CD4-positive, alpha-beta memory T cell (primary cell): ENCODE measurements at regions of chr14 and their contacts with region 1.

Region 1: DNA sequence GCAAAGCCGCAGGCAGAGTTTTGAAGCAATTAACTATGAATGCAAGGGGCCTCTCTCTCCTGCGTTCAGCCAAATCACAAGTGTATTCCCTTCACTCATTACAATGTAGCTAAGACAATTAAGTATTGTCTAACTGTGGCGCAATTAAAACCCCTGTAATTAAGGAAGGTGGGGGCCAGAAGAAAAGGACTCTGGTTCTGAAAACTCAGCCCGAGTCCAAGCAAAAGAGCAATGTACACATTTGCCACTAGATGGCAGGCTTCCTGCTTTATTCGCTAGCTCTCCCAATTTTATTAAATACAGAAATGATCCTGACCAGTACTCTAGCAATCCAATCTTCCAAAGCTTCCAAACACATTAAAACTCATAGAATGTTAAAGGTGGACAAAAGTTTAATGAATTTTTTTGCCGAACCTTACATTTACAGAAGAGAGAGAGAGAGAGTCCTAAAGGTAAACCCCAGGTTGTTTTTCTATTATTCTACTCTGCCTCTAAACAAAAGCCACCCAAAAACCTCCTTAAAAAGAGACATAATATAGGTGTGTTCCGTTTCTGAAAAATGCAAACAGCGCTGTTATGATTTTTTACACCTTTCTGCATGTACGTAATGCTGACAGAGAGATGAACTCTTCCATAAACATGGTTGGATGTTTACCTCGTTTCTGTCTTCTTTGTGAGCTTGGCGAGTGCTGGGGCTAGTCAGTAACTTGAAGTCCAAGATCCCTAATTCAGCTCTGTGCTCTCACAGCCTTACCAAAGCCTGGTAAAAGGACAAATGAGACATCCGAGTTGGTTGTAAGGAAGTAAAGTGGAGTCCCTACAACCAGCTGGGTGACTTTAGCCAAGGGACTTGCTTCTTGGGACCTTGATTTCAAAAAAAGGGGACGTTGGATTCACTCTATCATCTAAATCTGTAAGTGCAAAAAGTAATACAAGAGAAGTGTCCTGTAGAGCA is 50.9 kb upstream of the VASH1 start:
- DNase-seq: peak in 4 of 5 donors; percentile 14 to 40 (median 26)
- H3K4me3 ChIP-seq: no peak overlapping the region
- H3K4me3 Mint-ChIP-seq: no peak overlapping the region
- H3K27ac ChIP-seq: no peak overlapping the region
- H3K27ac Mint-ChIP-seq: no peak overlapping the region
- H3K4me1 ChIP-seq: no peaks in the 10 kb centered on the region
- H3K4me1 Mint-ChIP-seq: no peaks in the 10 kb centered on the region
- H3K27me3 ChIP-seq: no peaks in the 10 kb centered on the region
- H3K27me3 Mint-ChIP-seq: peaks cover 6 to 9% of the 10 kb centered on the region in 2 donors

Region 2: GRCh38 chr14:76329154-76329928 is 381.0 kb before region 1 on chr14:
- CTCF ChIA-PET with region 1: no interaction called
- POLR2A ChIA-PET with region 1: no interaction called
- intact Hi-C with region 1: no loop called
- DNase-seq: no peak
- H3K4me3 ChIP-seq: no peak overlapping the region
- H3K4me3 Mint-ChIP-seq: no peak overlapping the region
- H3K27ac ChIP-seq: no peak overlapping the region
- H3K27ac Mint-ChIP-seq: no peak overlapping the region
- H3K4me1 ChIP-seq: no peaks in the 10 kb centered on the region
- H3K4me1 Mint-ChIP-seq: no peaks in the 10 kb centered on the region
- H3K27me3 ChIP-seq: peaks cover 3% of the 10 kb centered on the region
- H3K27me3 Mint-ChIP-seq: peaks cover 34 to 45% of the 10 kb centered on the region in 2 donors

Region 3: DNA sequence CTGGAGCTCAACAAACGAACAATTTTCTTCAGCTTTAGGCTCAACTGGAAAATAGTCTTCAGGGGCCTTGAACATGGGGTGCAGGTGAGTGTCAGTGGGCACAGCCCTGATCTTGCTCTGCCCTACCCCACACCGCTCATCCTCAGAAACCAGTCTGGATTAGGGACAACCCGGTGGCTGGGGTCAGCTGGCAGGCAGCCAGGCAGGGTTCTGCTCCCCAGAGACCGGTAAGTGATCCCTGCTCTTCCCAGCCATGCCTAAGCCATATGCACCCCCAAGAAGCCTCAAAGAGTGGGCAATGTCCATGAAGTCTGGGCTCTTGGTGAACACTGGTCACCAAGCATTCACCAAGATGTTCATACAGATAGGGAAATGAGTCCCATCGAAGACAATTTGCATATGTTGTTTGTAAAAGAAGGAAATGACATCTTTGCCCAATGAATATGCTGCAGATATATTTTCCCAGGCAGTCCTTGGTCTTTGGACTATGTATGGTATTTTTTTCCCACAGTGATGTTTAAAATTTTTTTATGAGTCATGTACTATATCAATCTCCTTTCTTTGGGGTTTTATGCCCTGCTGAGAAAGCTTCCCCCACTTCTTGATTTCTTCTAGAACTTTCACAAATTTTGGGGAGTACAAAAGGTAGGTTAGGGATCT is 13.0 kb before region 1 on chr14:
- CTCF ChIA-PET with region 1: interaction called, 45 read pairs
- POLR2A ChIA-PET with region 1: no interaction called
- intact Hi-C with region 1: no loop called
- DNase-seq: no peak
- H3K4me3 ChIP-seq: no peak overlapping the region
- H3K4me3 Mint-ChIP-seq: no peak overlapping the region
- H3K27ac ChIP-seq: no peak overlapping the region
- H3K27ac Mint-ChIP-seq: no peak overlapping the region
- H3K4me1 ChIP-seq: no peaks in the 10 kb centered on the region
- H3K4me1 Mint-ChIP-seq: no peaks in the 10 kb centered on the region
- H3K27me3 ChIP-seq: no peaks in the 10 kb centered on the region
- H3K27me3 Mint-ChIP-seq: peaks cover 4% of the 10 kb centered on the region in 2 donors

Region 4: DNA sequence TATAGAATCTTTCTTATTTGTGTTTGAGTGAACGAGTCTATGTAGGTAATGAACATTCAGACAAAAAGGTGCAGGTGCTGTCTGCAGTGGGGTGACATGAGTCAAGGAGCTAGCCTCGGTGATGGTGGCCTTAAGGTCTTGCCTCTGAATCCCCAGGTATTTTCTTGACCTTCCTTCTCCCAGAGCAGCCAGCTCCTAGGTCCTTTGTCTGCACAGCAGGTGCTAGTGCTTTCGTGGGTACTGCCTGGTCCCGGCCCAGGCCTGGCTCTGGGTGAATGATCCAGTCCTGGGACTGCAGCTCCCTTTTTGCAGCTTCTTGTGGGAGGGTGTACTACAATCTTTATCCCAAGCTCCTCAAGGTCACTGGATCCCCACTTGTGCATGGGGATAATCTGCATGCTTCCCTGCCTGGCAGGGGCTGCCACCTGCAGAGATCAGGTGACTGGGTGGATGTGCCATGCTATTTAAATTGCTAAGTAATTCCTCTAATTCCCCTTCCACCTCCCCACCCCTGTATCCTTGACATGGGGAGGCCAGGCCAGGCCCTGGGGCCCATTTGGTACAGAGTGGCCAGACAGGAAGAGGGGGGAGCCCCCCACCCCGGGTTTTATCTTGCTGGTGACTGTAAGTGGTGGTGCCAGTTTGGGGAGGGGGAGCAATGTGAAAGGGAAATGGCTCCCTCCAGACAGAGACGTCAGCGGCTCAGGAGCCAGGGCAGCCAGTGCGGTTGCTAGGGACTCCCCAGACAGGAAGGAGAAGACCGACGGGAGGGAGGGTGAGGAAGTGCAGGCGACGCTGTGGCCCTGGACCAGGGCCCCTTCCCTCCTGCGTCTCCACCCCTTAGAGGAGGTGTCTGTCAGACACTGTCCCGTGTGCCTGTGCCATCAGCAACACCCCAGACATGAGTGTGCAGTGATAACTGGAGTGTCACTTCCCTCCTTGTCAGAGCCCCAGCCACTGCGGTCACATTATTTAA is 57.6 kb after region 1 on chr14:
- CTCF ChIA-PET with region 1: interaction called, 12 read pairs
- POLR2A ChIA-PET with region 1: interaction called, 3 read pairs
- intact Hi-C with region 1: no loop called
- DNase-seq: peak; percentile 16 to 96 (median 81)
- H3K4me3 ChIP-seq: peak overlapping the region in 1 of 2 donors; percentile 2
- H3K4me3 Mint-ChIP-seq: peak overlapping the region in 6 of 8 donors; percentile 16 to 69 (median 60)
- H3K27ac ChIP-seq: peak overlapping the region; percentile 75
- H3K27ac Mint-ChIP-seq: peak overlapping the region; percentile 74 to 94 (median 94)
- H3K4me1 ChIP-seq: peaks cover 33% of the 10 kb centered on the region
- H3K4me1 Mint-ChIP-seq: peaks cover 11 to 49% (median 17%) of the 10 kb centered on the region in 4 donors
- H3K27me3 ChIP-seq: no peaks in the 10 kb centered on the region
- H3K27me3 Mint-ChIP-seq: peaks cover 0 to 1% of the 10 kb centered on the region in 2 donors

Region 5: DNA sequence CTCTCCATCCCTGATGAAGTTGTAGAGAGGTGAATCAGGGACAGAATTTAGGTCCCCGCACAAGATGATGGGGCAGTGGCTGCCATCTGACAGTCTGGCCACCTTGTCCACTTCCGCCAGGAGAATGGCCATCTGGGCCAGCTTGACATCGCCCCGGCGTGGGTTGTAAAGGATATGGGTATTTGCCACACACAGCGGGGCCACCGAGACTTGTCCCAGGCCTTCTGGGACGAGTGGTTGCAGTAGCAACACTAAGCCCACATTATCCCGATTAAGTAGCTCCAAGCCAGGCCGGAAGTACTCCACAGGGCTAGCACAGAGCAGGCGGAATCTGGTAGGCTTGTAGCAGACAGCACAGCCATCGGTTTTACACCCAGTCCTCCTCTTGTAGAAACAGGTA is 96.1 kb after region 1 on chr14:
- CTCF ChIA-PET with region 1: interaction called, 74 read pairs
- POLR2A ChIA-PET with region 1: interaction called, 9 read pairs
- intact Hi-C with region 1: loop called (anchors 1 kb)
- DNase-seq: no peak
- H3K4me3 ChIP-seq: no peak overlapping the region
- H3K4me3 Mint-ChIP-seq: no peak overlapping the region
- H3K27ac ChIP-seq: no peak overlapping the region
- H3K27ac Mint-ChIP-seq: peak overlapping the region in 1 of 7 donors; percentile 4
- H3K4me1 ChIP-seq: peaks cover 11% of the 10 kb centered on the region
- H3K4me1 Mint-ChIP-seq: peaks cover 12 to 20% (median 17%) of the 10 kb centered on the region in 4 donors
- H3K27me3 ChIP-seq: no peaks in the 10 kb centered on the region
- H3K27me3 Mint-ChIP-seq: no peaks in the 10 kb centered on the region

Region 6: DNA sequence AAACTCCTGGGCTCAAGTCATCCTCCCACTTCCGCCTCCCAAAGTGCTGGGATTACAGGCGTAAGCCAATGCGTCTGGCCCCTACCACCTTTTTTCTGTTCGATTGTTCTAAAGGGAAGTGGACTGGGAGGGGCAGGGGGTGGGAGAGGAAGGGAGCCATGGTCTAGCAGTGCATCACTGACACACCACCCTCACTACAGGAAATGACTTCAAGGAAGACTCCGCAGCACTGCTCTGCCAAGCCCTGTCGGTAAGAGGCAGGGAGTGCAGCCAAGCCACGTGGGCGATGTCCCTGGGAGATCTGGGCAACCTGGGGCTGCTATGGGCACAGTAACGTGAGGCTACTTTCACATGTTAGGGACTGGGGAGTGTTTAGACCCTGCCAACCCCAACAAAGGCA is 133.9 kb after region 1 on chr14:
- CTCF ChIA-PET with region 1: no interaction called
- POLR2A ChIA-PET with region 1: no interaction called
- intact Hi-C with region 1: loop called (anchors 1 kb)
- DNase-seq: peak; percentile 54 to 75 (median 69)
- H3K4me3 ChIP-seq: peak overlapping the region in 1 of 2 donors; percentile 5
- H3K4me3 Mint-ChIP-seq: peak overlapping the region in 7 of 8 donors; percentile 6 to 78 (median 61)
- H3K27ac ChIP-seq: no peak overlapping the region
- H3K27ac Mint-ChIP-seq: peak overlapping the region in 6 of 7 donors; percentile 25 to 84 (median 72)
- H3K4me1 ChIP-seq: peaks cover 12% of the 10 kb centered on the region
- H3K4me1 Mint-ChIP-seq: peaks cover 6 to 9% (median 8%) of the 10 kb centered on the region in 4 donors
- H3K27me3 ChIP-seq: no peaks in the 10 kb centered on the region
- H3K27me3 Mint-ChIP-seq: peaks cover 7 to 13% of the 10 kb centered on the region in 2 donors

Region 7: GRCh38 chr14:77076113-77076631 is 365.8 kb after region 1 on chr14:
- CTCF ChIA-PET with region 1: interaction called, 22 read pairs
- POLR2A ChIA-PET with region 1: no interaction called
- intact Hi-C with region 1: no loop called
- DNase-seq: no peak
- H3K4me3 ChIP-seq: no peak overlapping the region
- H3K4me3 Mint-ChIP-seq: no peak overlapping the region
- H3K27ac ChIP-seq: no peak overlapping the region
- H3K27ac Mint-ChIP-seq: no peak overlapping the region
- H3K4me1 ChIP-seq: no peaks in the 10 kb centered on the region
- H3K4me1 Mint-ChIP-seq: no peaks in the 10 kb centered on the region
- H3K27me3 ChIP-seq: no peaks in the 10 kb centered on the region
- H3K27me3 Mint-ChIP-seq: peaks cover 0 to 2% of the 10 kb centered on the region in 2 donors